Head of caudate nucleus (tissue), 42 donors: ENCODE measurements at regions of chr10 and their contacts with region 1.

Region 1: GRCh38 chr10:86366033-86366901 is at the start of gene GRID1:
- DNase-seq: peak; percentile 17 to 92 (median 82)

Region 2: GRCh38 chr10:86079088-86079487 is 287.2 kb before region 1 on chr10:
- intact Hi-C with region 1: no loop called
- DNase-seq: peak in 8 of 42 donors; percentile 14 to 79 (median 48)

Region 3: DNA sequence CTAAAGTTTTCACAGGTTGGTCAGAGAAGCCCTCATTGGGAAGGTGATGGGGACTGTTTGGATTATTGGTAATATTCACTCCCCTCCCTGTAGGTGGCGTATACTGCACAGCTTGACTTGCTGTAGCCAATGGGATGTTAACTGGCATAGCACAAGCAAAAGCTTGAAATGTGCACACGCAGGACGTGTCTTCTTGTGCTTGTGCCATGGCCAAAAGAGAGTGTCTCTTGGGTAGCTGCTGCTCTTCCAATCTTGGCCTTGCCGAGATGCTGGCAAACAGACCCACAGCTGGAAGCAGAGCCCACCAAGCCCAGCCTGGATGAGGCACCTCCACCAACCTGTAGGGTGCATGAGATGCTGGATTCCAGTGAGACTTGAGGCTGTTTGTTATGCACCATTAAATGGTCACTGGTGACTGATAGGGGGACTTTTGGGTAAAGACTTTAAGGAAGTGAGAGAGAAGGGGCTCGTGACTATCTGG is 265.6 kb before region 1 on chr10:
- intact Hi-C with region 1: loop called (anchors 10 kb)
- DNase-seq: peak in 8 of 42 donors; percentile 25 to 58 (median 38)

Region 4: GRCh38 chr10:86182150-86182549 is 184.1 kb before region 1 on chr10:
- intact Hi-C with region 1: loop called (anchors 5 kb)
- DNase-seq: peak; percentile 62 to 92 (median 84)

Region 5: DNA sequence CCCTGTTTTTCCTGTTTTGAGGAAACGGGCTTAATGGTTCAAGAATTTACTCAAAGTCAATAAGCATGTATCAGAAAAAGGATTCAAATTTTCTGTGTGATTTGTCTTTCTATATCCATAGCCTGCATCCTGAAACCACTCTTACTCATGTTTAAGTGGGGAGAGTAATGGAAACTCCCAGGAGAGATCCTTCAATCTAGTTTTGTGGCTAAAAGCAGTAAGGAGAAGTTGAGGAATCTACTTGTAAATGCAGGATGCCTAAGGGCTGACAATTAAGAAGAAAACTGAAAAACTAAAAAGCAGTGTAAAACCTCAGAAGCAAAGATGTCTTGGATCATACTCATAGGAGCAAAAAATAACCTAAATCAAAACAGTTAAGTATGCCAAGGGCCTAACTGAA is 68.4 kb after region 1 on chr10:
- intact Hi-C with region 1: no loop called
- DNase-seq: no peak

Region 6: DNA sequence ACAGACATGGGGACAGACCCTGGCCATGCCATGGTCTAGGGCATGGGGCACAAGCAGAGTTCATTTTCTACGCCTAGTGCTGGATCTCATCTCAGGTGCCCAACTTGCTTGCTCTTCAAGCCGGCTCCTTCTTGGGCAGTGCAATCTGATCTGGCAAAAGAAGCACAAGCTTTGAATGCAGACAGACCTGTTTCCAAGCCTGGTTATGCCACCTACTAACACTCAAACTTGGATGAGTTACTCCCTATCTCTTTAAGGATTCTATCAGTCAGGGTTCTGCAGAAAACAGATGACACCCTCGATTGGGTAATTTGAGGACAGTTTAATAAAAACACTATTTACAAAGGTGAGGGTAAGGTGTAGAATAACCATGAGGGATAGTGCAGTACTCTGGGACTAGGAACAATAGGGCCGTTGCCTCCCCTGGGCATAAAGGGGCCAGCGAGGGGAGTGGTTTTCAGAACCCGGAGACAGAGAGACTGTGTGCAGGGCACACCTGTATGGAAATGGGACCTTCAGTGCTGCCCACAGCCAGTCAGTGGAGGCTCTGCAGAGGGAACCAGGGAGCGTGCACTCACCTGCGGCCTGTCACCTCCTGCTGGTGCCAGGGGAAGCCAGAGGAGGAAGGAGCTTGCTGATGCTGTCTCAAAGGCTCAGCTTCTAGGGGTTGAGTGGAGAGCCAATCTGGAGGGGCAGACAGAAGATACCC is 190.5 kb after region 1 on chr10:
- intact Hi-C with region 1: no loop called
- DNase-seq: no peak